PC-3 (cell line): ENCODE measurements at regions of chr2 and their contacts with region 1.

Region 1: GRCh38 chr2:227132986-227133385 is 31.0 kb downstream of the COL4A4 start:
- DNase-seq: no peak
- ATAC-seq: no peak
- H3K4me3 ChIP-seq: no peak overlapping the region
- H3K27ac ChIP-seq: no peak overlapping the region
- H3K4me1 ChIP-seq: no peaks in the 10 kb centered on the region
- H3K27me3 ChIP-seq: no peaks in the 10 kb centered on the region
- CTCF ChIP-seq: no peak

Region 2: DNA sequence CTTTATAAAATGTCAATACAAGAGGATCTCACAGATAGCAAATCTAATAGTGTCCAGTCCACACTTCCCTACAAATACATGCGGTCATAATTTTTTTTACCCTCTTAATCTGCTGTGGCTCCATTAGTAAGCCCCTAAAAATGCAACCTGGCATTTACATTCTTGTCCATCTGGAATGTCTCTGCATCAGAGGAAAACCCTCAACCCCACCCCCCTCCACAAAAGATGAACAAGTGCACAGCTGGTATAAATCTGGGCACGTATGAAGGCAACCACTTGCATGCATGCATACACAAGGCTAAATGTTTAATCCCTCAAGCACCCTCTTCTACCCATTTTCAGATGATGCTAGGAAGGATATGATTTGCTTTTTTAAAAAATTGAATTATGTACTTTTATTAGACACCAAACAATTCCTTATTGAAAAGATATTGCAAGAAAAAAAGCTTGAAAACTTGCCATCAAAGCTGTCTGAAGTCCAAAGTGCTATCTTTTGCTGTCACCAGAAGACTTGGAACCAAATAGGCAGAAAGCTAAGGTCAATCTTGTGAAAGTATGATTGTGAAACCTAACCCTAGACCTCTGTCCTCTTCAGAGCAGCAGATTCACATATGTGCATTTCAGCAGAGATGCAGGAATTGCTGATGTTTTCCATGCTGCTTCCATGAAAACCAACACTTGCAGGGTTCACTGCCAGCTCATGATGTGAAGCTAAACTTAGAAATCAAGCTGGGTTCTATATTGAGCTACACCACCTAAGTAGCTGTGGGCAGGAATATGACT is 372.4 kb before region 1 on chr2:
- CTCF ChIA-PET with region 1: no interaction called
- POLR2A ChIA-PET with region 1: no interaction called
- intact Hi-C with region 1: no loop called
- DNase-seq: peak; percentile 65
- ATAC-seq: peak; percentile 29
- H3K4me3 ChIP-seq: no peak overlapping the region
- H3K27ac ChIP-seq: no peak overlapping the region
- H3K4me1 ChIP-seq: peaks cover 40% of the 10 kb centered on the region
- H3K27me3 ChIP-seq: no peaks in the 10 kb centered on the region
- CTCF ChIP-seq: no peak

Region 3: DNA sequence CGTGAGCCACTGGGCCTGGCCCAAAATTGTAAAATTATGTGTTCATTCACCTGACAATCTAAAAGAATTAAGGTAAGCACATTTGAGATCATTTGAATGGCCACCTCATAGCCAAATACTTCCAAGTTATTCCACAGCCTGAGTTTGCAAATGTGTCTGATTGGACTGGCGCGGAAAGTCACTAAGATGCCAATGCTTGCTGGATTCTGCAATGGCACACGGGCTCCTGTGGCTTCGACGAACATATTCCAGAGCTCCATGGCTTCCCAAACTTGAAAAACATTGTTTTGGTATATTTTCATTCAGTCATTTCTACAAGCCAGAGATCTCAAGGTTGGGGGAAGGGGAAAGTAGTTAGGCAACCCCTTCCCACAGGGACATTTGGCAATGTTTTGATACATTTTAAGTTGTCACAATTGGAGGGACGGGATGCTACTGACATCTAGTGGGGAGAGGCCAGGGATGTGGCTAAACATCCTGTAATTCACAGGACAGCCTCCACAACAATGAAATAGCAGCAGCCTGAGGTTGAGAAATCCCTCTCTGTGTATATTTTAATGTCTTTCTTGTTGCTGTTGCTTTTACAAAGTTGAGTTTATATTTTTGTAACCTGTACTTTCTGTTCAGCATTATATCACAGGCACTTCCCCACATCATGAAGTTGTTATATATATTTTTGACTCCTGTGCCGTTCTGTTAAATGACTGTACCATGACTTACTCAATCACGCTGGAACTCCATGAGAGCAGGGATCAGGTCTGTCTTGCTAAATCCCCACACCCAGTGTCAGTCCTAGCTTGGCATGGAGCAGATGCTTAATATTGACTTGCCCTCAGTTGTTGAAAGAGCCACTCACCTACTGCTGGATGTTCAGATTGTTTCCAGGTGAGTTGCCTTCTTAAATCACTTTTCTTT is 25.9 kb before region 1 on chr2:
- CTCF ChIA-PET with region 1: no interaction called
- POLR2A ChIA-PET with region 1: no interaction called
- intact Hi-C with region 1: no loop called
- DNase-seq: peak; percentile 81
- ATAC-seq: peak; percentile 97
- H3K4me3 ChIP-seq: peak overlapping the region; percentile 21; the same call in 1 of the 2 replicates
- H3K27ac ChIP-seq: no peak overlapping the region
- H3K4me1 ChIP-seq: no peaks in the 10 kb centered on the region
- H3K27me3 ChIP-seq: no peaks in the 10 kb centered on the region
- CTCF ChIP-seq: peak; percentile 93

Region 4: DNA sequence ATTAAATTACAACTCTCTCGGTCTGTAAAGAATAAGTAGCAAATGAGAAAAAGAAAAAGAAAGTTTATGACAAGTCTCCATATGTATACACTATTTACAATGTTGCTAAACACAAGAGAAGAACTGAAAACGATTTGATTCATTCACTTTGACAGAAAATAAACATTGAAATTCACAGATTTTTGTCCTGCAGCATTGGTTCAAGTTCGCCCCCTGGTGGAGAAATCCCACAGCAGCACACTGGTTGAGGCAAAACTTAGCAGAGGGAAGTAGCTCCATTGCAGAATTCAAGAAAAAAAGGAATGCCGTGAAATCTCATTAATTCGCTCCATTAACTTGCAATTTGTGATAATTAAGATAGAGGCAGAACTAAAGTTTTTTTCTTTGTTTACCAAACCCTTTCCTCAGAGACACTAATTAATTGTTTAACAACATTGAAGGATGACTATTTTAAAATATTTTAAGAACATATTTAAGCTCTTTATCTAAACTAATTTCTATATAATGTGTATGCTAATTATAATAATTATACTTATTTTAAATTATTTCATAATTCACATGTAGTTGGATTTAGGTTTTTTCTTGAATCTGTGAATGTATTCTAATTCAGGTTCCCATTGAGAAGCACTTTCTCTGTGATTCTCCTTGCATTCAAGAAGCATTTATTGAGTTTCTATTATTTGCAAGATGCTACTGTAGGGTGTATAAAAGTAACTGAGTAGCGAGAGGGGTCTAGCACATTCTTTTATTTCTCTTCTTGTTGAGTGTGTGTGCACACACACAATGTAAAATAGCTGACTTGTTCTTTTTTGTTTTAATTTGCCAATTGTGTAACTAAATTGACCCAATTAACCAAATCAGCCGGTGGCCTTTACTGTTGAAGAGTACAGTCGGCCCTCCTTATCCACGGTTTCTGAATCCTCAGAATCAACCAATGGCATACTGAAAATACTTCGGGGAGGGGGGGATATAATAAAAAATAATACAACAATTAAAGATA is 105.6 kb after region 1 on chr2:
- CTCF ChIA-PET with region 1: interaction called, 12 read pairs
- POLR2A ChIA-PET with region 1: no interaction called
- intact Hi-C with region 1: loop called (anchors 1 kb)
- DNase-seq: peak; percentile 79
- ATAC-seq: peak; percentile 67
- H3K4me3 ChIP-seq: no peak overlapping the region
- H3K27ac ChIP-seq: no peak overlapping the region
- H3K4me1 ChIP-seq: no peaks in the 10 kb centered on the region
- H3K27me3 ChIP-seq: peaks cover 7% of the 10 kb centered on the region; the same call in 1 of the 2 replicates
- CTCF ChIP-seq: peak; percentile 97

Region 5: GRCh38 chr2:227324995-227325838 is 192.2 kb after region 1 on chr2 and contains the start of gene MFF:
- CTCF ChIA-PET with region 1: no interaction called
- POLR2A ChIA-PET with region 1: no interaction called
- intact Hi-C with region 1: loop called (anchors 2 kb)
- DNase-seq: peak; percentile 90
- ATAC-seq: peak; percentile 82
- H3K4me3 ChIP-seq: peak within 1 kb of the TSS; percentile 86
- H3K27ac ChIP-seq: peak within 1 kb of the TSS; percentile 59
- H3K4me1 ChIP-seq: peaks cover 31% of the 10 kb centered on the region
- H3K27me3 ChIP-seq: no peaks in the 10 kb centered on the region
- CTCF ChIP-seq: peak; percentile 54; the same call in 1 of the 2 replicates
- total RNA-seq, gene MFF: 85.6 and 103 TPM in 2 replicates

Region 6: GRCh38 chr2:227406177-227407031 is 273.4 kb after region 1 on chr2:
- CTCF ChIA-PET with region 1: interaction called, 3 read pairs
- POLR2A ChIA-PET with region 1: no interaction called
- intact Hi-C with region 1: loop called (anchors 10 kb)
- DNase-seq: peak; percentile 99
- ATAC-seq: peak; percentile 91
- H3K4me3 ChIP-seq: no peak overlapping the region
- H3K27ac ChIP-seq: peak overlapping the region; percentile 48
- H3K4me1 ChIP-seq: peaks cover 14% of the 10 kb centered on the region
- H3K27me3 ChIP-seq: no peaks in the 10 kb centered on the region
- CTCF ChIP-seq: peak; percentile 90

Region 7: DNA sequence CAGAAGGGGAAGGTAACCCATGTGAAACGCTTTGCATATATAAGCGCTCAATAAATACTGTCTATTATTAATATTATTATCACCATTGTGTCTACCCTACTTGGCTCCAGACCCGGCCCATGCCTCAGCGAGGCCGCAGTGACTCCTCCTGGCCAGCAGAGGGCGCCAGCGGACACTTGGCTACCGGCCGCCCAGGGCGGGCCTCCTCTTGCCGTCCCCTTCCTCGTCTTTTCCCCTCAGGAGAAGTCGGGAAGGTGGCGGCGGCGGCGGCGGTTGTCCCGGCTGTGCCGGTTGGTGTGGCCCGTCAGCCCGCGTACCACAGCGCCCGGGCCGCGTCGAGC is 338.9 kb after region 1 on chr2 and contains the start of gene AGFG1:
- CTCF ChIA-PET with region 1: no interaction called
- POLR2A ChIA-PET with region 1: no interaction called
- intact Hi-C with region 1: loop called (anchors 5 kb)
- DNase-seq: peak; percentile 84
- ATAC-seq: peak; percentile 53
- H3K4me3 ChIP-seq: peak within 1 kb of the TSS; percentile 94
- H3K27ac ChIP-seq: no peak within 1 kb of the TSS
- H3K4me1 ChIP-seq: peaks cover 42% of the 10 kb centered on the region
- H3K27me3 ChIP-seq: no peaks in the 10 kb centered on the region
- CTCF ChIP-seq: peak; percentile 87
- total RNA-seq, gene AGFG1: 44.0 and 56.3 TPM in 2 replicates

Region 8: GRCh38 chr2:227766373-227766883 is 633.4 kb after region 1 on chr2:
- CTCF ChIA-PET with region 1: no interaction called
- POLR2A ChIA-PET with region 1: no interaction called
- intact Hi-C with region 1: loop called (anchors 1 kb)
- DNase-seq: peak; percentile 81
- ATAC-seq: peak; percentile 100
- H3K4me3 ChIP-seq: no peak overlapping the region
- H3K27ac ChIP-seq: no peak overlapping the region
- H3K4me1 ChIP-seq: no peaks in the 10 kb centered on the region
- H3K27me3 ChIP-seq: no peaks in the 10 kb centered on the region
- CTCF ChIP-seq: peak; percentile 91